ENCODE measurements at regions of chrX and their contacts with region 1.

Region 1: DNA sequence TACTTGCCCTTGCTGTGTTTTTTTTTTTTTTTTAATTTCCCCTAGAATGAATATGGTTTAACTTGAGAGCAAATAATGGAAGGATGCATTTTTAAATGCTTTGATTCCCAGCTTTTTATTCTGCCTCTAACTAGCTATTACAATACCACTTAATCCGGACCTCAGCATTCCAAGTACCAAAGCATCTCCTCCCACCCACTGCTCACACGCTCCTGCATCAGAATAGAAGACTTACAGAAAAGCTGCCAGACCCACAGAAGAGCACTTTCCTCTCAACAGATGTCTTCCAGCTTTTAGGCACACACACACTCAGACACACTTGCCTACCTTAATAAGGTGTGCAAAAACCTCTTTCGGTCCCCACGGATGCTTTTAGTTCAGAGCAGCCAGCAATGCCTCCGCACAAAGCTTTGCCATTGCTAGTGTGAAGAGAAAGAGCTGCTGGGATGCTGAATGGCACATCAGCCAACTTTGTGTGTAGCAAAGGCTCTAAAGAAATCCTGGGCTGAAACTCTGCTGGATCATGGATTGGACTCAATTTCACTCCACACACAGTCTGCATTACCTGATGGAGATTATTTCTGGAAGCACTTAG is 1056.2 kb downstream of the DMD start:
- DNase-seq: no peak
- H3K4me3 ChIP-seq: no peak overlapping the region
- H3K27ac ChIP-seq: no peak overlapping the region
- H3K4me1 ChIP-seq: no peaks in the 10 kb centered on the region
- CTCF ChIP-seq: no peak

Region 2: DNA sequence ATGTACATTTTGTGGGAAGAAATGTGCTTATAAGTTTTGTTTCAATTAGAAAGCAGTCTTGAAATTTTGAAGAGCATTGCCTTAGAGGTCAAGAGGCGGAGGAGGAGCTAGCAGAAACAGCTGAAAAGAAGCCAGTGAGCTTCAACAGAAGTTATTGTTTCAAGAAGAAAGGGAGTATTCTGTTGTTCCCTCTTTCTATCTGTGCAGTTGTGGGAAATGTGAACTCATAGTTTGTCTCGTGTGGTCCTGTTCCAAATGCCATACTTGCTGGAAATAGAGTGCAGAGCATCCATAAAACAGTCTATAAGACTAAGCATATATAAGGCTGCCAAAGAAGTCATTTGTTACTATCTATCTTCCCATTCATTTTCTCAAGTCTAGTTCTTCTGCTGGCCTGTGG is 40.5 kb after region 1 on chrX:
- CTCF ChIA-PET with region 1: no interaction called
- POLR2A ChIA-PET with region 1: interaction called, 10 read pairs
- intact Hi-C with region 1: no loop called
- DNase-seq: no peak
- H3K4me3 ChIP-seq: no peak overlapping the region
- H3K27ac ChIP-seq: no peak overlapping the region
- H3K4me1 ChIP-seq: no peaks in the 10 kb centered on the region
- CTCF ChIP-seq: no peak